GM12878 (cell line): ENCODE measurements at regions of chr14 and their contacts with region 1.

Region 1: GRCh38 chr14:97276573-97276972 is 479.4 kb downstream of the VRK1 start:
- DNase-seq: no peak
- ATAC-seq: no peak
- H3K4me3 ChIP-seq: no peak overlapping the region
- H3K27ac ChIP-seq: no peak overlapping the region
- H3K4me1 ChIP-seq: no peaks in the 10 kb centered on the region
- H3K27me3 ChIP-seq: no peaks in the 10 kb centered on the region
- CTCF ChIP-seq: no peak
- EP300 ChIP-seq: no peak
- POLR2A ChIP-seq: no peak
- RAD21 ChIP-seq: no peak

Region 2: DNA sequence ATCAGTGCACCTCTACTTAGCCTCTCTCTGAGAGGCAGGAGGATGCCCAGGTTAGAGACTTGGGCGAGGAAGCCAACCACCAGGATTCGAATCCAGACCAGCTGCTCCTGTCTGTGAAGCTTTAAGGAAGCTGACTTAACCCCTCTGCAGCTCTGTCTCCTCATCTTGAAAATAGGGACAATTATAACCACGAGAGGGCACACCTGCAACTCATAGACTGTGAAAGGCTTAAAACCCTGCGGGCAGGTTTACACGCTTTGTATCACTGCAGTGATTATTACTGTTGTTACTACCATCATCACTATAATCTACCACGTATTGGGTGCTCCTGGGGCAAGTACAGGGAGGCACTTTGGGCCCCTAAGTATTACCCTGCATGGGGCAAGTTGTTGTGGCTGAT is 99.6 kb before region 1 on chr14:
- CTCF ChIA-PET with region 1: no interaction called
- POLR2A ChIA-PET with region 1: no interaction called
- RAD21 ChIA-PET with region 1: no interaction called
- SMC1A ChIA-PET with region 1: no interaction called
- in situ Hi-C with region 1: no loop called
- intact Hi-C with region 1: loop called (anchors 5 kb)
- DNase-seq: no peak
- ATAC-seq: peak; percentile 82
- H3K4me3 ChIP-seq: no peak overlapping the region
- H3K27ac ChIP-seq: no peak overlapping the region
- H3K4me1 ChIP-seq: peaks cover 4% of the 10 kb centered on the region; the same call in 1 of the 2 replicates
- H3K27me3 ChIP-seq: no peaks in the 10 kb centered on the region
- CTCF ChIP-seq: peak; percentile 8 to 41 (median 27); a peak in 3 of 6 replicates
- EP300 ChIP-seq: no peak
- POLR2A ChIP-seq: no peak
- RAD21 ChIP-seq: peak; percentile 53

Region 3: DNA sequence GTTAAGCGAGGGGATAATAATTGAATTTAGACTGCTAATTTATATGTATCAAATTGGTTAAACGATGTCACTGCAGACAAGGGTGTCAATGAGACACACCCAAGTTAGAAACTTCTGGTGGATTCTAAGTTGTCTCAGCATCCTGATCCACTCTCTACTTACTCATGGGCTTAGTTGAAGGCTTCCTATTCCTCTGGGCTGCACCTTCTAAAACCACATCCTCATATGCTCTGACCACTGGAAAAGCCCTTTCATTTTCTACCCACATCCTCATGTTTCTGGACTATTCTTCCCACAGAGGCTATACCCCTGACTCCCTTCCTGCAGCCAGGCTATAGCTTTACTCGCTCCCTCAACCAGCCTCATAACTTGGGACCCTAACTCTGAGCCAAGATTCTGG is 14.4 kb after region 1 on chr14:
- CTCF ChIA-PET with region 1: interaction called, 10 read pairs
- POLR2A ChIA-PET with region 1: no interaction called
- RAD21 ChIA-PET with region 1: no interaction called
- SMC1A ChIA-PET with region 1: interaction called, 3 read pairs
- in situ Hi-C with region 1: no loop called
- intact Hi-C with region 1: no loop called
- DNase-seq: no peak
- ATAC-seq: no peak
- H3K4me3 ChIP-seq: no peak overlapping the region
- H3K27ac ChIP-seq: no peak overlapping the region
- H3K4me1 ChIP-seq: no peaks in the 10 kb centered on the region
- H3K27me3 ChIP-seq: no peaks in the 10 kb centered on the region
- CTCF ChIP-seq: no peak
- EP300 ChIP-seq: no peak
- POLR2A ChIP-seq: no peak
- RAD21 ChIP-seq: no peak

Region 4: GRCh38 chr14:97306760-97307246 is 30.2 kb after region 1 on chr14:
- CTCF ChIA-PET with region 1: no interaction called
- POLR2A ChIA-PET with region 1: no interaction called
- RAD21 ChIA-PET with region 1: no interaction called
- SMC1A ChIA-PET with region 1: no interaction called
- in situ Hi-C with region 1: no loop called
- intact Hi-C with region 1: no loop called
- DNase-seq: peak; percentile 67
- ATAC-seq: peak; percentile 68
- H3K4me3 ChIP-seq: no peak overlapping the region
- H3K27ac ChIP-seq: peak overlapping the region; percentile 91
- H3K4me1 ChIP-seq: peaks cover 13% of the 10 kb centered on the region
- H3K27me3 ChIP-seq: no peaks in the 10 kb centered on the region
- CTCF ChIP-seq: no peak
- EP300 ChIP-seq: 0 out of 4 replicates have a peak, but pooled peaks have one; percentile 10 to 29
- POLR2A ChIP-seq: no peak
- RAD21 ChIP-seq: no peak